ENCODE measurements at regions of chr7 and their contacts with region 1.

Region 1: DNA sequence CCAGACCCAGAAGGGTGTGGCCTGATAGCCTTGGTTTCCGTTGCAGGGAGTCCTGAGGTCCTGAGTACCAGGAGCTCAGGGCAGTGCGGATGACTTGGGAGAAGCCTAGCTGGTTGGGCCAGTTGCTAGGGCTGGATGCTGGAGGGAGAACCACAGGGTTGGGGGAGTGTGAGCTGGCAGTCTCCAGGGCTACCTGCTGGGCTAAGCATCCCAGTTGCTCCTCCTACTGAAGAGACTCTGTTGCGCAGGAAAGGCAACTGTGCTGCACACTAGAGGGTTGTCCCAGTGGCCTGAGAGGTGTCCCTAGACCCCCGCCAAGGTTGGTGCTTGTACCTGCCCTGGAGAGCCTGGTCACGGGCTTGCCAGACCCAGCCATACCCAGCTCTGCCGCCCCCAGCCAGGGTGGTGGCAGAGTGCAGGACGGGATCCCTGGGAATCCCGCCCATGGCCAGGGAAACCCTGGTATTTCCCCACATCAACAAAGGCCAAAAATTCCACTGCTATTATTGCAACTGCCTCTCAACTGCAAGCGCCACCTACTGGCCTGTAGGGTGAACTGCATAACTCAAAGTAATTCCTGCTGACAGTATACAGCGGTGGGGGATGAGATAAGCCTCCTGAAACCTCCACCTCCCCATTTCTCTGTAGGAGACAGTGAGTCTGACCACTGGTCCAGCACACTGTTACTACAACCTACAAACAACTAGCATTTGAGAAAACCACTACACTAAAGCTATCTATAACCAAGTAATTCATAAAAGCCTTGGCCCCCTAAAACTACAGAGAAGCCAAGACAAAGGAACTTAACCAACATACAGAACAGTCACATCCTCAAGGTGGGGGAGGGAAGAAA is 67.6 kb upstream of the DDC start:
- DNase-seq: peak; percentile 65
- H3K4me3 Mint-ChIP-seq: no peak overlapping the region
- H3K27ac Mint-ChIP-seq: no peak overlapping the region
- H3K4me1 Mint-ChIP-seq: peaks cover 7% of the 10 kb centered on the region
- H3K27me3 Mint-ChIP-seq: peaks cover 2% of the 10 kb centered on the region

Region 2: GRCh38 chr7:50618301-50618700 is 14.5 kb before region 1 on chr7:
- CTCF ChIA-PET with region 1: interaction called, 18 read pairs
- POLR2A ChIA-PET with region 1: no interaction called
- intact Hi-C with region 1: no loop called
- DNase-seq: no peak
- H3K4me3 Mint-ChIP-seq: no peak overlapping the region
- H3K27ac Mint-ChIP-seq: no peak overlapping the region
- H3K4me1 Mint-ChIP-seq: no peaks in the 10 kb centered on the region
- H3K27me3 Mint-ChIP-seq: no peaks in the 10 kb centered on the region

Region 3: GRCh38 chr7:50679218-50680007 is 46.6 kb after region 1 on chr7:
- CTCF ChIA-PET with region 1: interaction called, 10 read pairs
- POLR2A ChIA-PET with region 1: no interaction called
- intact Hi-C with region 1: no loop called
- DNase-seq: no peak
- H3K4me3 Mint-ChIP-seq: no peak overlapping the region
- H3K27ac Mint-ChIP-seq: no peak overlapping the region
- H3K4me1 Mint-ChIP-seq: no peaks in the 10 kb centered on the region
- H3K27me3 Mint-ChIP-seq: no peaks in the 10 kb centered on the region

Region 4: GRCh38 chr7:50782384-50783208 is 149.8 kb after region 1 on chr7 and contains the start of gene GRB10:
- CTCF ChIA-PET with region 1: no interaction called
- POLR2A ChIA-PET with region 1: no interaction called
- intact Hi-C with region 1: no loop called
- DNase-seq: no peak
- H3K4me3 Mint-ChIP-seq: peak within 1 kb of the TSS; percentile 65
- H3K27ac Mint-ChIP-seq: no peak within 1 kb of the TSS
- H3K4me1 Mint-ChIP-seq: peaks cover 21% of the 10 kb centered on the region
- H3K27me3 Mint-ChIP-seq: peaks cover 7% of the 10 kb centered on the region
- total RNA-seq, gene GRB10: 8.4 to 9.9 TPM

Region 5: DNA sequence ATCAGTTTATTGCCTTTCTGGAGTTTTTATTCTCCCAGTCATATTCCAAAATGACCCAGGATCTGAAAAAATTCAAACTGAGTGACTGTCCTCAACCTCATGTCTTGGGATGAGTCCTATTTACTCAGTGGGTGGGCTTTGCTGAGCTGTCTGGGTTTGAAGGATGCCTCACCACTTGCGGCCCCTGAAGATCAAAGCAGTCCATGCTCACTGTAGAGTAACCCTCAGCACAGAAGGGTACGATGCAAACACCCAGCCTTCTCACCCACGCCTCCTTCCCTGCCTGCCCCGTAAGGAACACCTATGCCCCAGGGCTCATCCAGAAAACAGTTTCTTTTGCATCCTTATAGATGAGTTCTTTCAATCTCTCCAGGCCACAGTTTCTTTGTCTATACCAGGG is 192.1 kb after region 1 on chr7:
- CTCF ChIA-PET with region 1: no interaction called
- POLR2A ChIA-PET with region 1: no interaction called
- intact Hi-C with region 1: no loop called
- DNase-seq: no peak
- H3K4me3 Mint-ChIP-seq: no peak overlapping the region
- H3K27ac Mint-ChIP-seq: no peak overlapping the region
- H3K4me1 Mint-ChIP-seq: peaks cover 15% of the 10 kb centered on the region
- H3K27me3 Mint-ChIP-seq: peaks cover 4% of the 10 kb centered on the region